CD4-positive, alpha-beta memory T cell (primary cell): ENCODE measurements at regions of chr2 and their contacts with region 1.

Region 1: GRCh38 chr2:189096769-189097447 is 82.7 kb downstream of the COL5A2 start:
- DNase-seq: no peak
- H3K4me3 ChIP-seq: no peak overlapping the region
- H3K4me3 Mint-ChIP-seq: no peak overlapping the region
- H3K27ac ChIP-seq: no peak overlapping the region
- H3K27ac Mint-ChIP-seq: peak overlapping the region in 1 of 7 donors; percentile 68
- H3K4me1 ChIP-seq: no peaks in the 10 kb centered on the region
- H3K4me1 Mint-ChIP-seq: peaks cover 0 to 3% (median 0%) of the 10 kb centered on the region in 4 donors
- H3K27me3 ChIP-seq: no peaks in the 10 kb centered on the region
- H3K27me3 Mint-ChIP-seq: no peaks in the 10 kb centered on the region

Region 2: GRCh38 chr2:189082376-189082975 is 14.4 kb before region 1 on chr2:
- CTCF ChIA-PET with region 1: interaction called, 21 read pairs
- POLR2A ChIA-PET with region 1: no interaction called
- intact Hi-C with region 1: no loop called
- DNase-seq: peak in 1 of 5 donors; percentile 23
- H3K4me3 ChIP-seq: no peak overlapping the region
- H3K4me3 Mint-ChIP-seq: no peak overlapping the region
- H3K27ac ChIP-seq: no peak overlapping the region
- H3K27ac Mint-ChIP-seq: no peak overlapping the region
- H3K4me1 ChIP-seq: no peaks in the 10 kb centered on the region
- H3K4me1 Mint-ChIP-seq: no peaks in the 10 kb centered on the region
- H3K27me3 ChIP-seq: no peaks in the 10 kb centered on the region
- H3K27me3 Mint-ChIP-seq: no peaks in the 10 kb centered on the region

Region 3: GRCh38 chr2:189142893-189143759 is 46.2 kb after region 1 on chr2:
- CTCF ChIA-PET with region 1: interaction called, 15 read pairs
- POLR2A ChIA-PET with region 1: no interaction called
- intact Hi-C with region 1: loop called (anchors 1 kb)
- DNase-seq: peak; percentile 52 to 62 (median 54)
- H3K4me3 ChIP-seq: no peak overlapping the region
- H3K4me3 Mint-ChIP-seq: no peak overlapping the region
- H3K27ac ChIP-seq: no peak overlapping the region
- H3K27ac Mint-ChIP-seq: no peak overlapping the region
- H3K4me1 ChIP-seq: no peaks in the 10 kb centered on the region
- H3K4me1 Mint-ChIP-seq: no peaks in the 10 kb centered on the region
- H3K27me3 ChIP-seq: no peaks in the 10 kb centered on the region
- H3K27me3 Mint-ChIP-seq: no peaks in the 10 kb centered on the region

Region 4: GRCh38 chr2:189287982-189288521 is 191.1 kb after region 1 on chr2:
- CTCF ChIA-PET with region 1: interaction called, 7 read pairs
- POLR2A ChIA-PET with region 1: no interaction called
- intact Hi-C with region 1: loop called (anchors 1 kb)
- DNase-seq: peak in 4 of 5 donors; percentile 22 to 36 (median 28)
- H3K4me3 ChIP-seq: no peak overlapping the region
- H3K4me3 Mint-ChIP-seq: no peak overlapping the region
- H3K27ac ChIP-seq: no peak overlapping the region
- H3K27ac Mint-ChIP-seq: peak overlapping the region in 1 of 7 donors; percentile 49
- H3K4me1 ChIP-seq: no peaks in the 10 kb centered on the region
- H3K4me1 Mint-ChIP-seq: peaks cover 4 to 15% (median 7%) of the 10 kb centered on the region in 4 donors
- H3K27me3 ChIP-seq: no peaks in the 10 kb centered on the region
- H3K27me3 Mint-ChIP-seq: no peaks in the 10 kb centered on the region

Region 5: DNA sequence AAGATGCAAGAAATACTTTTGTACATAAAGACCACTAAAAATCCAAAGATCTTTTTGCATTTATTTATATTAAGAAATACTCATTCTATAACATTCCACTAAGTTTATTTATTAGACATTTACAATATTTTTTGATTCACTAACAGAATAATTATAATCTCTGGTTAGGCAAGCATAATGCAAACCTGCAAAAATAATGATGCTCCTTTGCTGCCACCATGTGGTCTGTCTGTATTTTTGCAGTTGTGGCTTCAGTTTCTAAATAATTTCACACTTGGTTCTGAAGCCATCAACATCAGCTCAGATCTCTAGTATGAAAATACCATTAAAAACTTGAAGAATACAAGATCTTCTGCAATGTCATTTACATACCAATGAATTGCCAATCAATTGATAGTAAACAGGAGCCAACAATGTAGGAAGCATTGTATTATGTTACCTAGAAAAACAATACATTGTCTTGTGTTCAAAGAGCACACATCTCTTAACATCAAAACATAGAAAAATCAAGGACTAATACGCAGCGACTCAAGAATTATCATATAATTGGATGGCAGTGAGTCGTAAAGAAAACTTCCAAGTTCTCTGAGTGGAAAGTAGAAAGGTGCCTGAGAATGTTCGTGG is 315.5 kb after region 1 on chr2:
- CTCF ChIA-PET with region 1: interaction called, 37 read pairs
- POLR2A ChIA-PET with region 1: no interaction called
- intact Hi-C with region 1: loop called (anchors 1 kb)
- DNase-seq: peak in 4 of 5 donors; percentile 44 to 54 (median 46)
- H3K4me3 ChIP-seq: no peak overlapping the region
- H3K4me3 Mint-ChIP-seq: no peak overlapping the region
- H3K27ac ChIP-seq: no peak overlapping the region
- H3K27ac Mint-ChIP-seq: no peak overlapping the region
- H3K4me1 ChIP-seq: no peaks in the 10 kb centered on the region
- H3K4me1 Mint-ChIP-seq: peaks cover 7 to 9% (median 9%) of the 10 kb centered on the region in 4 donors
- H3K27me3 ChIP-seq: no peaks in the 10 kb centered on the region
- H3K27me3 Mint-ChIP-seq: no peaks in the 10 kb centered on the region

Region 6: DNA sequence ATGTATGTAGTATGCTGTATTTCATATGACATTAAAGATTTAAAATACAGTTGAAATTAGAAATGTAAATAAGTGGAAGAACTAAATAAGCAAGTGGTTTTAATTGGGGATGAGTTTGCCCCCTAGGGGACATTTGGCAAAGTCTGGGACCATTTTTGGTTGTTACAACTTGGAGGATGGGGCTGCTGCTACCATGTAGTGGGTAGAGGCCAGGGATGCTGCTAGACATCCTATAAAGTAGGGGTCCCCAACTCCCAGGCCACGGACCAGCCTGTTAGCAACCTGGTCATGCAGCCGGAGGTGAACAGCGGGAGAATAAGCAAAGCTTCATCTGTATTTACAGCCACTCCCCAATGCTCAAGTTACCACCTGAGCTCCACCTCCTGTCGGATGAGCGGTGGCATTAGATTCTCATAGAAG is 536.5 kb after region 1 on chr2:
- CTCF ChIA-PET with region 1: no interaction called
- POLR2A ChIA-PET with region 1: no interaction called
- intact Hi-C with region 1: loop called (anchors 2 kb)
- DNase-seq: peak; percentile 24 to 33 (median 31)
- H3K4me3 ChIP-seq: no peak overlapping the region
- H3K4me3 Mint-ChIP-seq: no peak overlapping the region
- H3K27ac ChIP-seq: no peak overlapping the region
- H3K27ac Mint-ChIP-seq: no peak overlapping the region
- H3K4me1 ChIP-seq: no peaks in the 10 kb centered on the region
- H3K4me1 Mint-ChIP-seq: peaks cover 0 to 1% (median 0%) of the 10 kb centered on the region in 4 donors
- H3K27me3 ChIP-seq: no peaks in the 10 kb centered on the region
- H3K27me3 Mint-ChIP-seq: no peaks in the 10 kb centered on the region